H1 (cell line): ENCODE measurements at regions of chr5 and their contacts with region 1.

Region 1: DNA sequence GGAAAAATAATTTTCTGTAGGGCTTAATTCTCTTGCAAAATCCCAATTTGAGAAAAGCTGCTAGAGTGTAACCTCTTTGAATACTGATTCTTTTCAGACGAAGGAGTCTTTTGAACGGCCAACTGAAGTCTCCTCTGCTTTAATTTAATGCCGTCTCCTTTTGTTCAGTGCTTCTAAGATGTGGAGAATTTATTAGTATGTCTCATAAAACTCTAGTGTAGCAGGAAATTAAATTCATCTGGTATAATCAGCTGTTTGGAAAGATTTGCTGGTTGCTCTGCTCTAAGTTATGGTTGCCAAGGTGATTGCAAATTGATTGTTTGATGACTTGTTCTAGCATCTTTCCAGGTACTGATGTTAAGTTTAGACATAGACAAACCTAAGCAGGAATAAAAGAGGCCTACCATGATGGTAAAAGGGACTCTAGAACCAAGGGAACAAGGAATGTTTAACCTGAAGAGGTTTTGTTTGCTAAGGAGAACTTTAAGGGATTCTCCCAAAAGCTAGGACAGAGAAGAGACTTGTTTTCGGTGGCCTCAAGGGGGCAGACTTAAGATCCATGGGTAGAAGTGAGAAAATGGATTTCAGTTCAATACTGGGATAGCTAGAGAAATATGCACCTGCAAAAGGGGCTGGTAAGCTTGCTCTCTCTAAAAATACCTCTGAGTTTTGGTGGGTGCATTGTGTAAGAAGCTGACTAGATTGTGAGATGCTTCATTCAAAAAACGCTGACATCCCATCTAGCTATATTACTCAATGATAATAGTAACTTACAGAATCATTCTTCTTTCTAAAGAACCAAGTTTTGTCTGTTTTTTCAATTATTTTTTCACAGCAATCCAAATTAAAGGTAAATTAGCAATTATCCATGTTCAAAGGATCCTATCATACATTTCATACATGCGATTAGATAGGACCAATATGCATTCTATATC is 5.7 kb upstream of the ADRB2 start:
- DNase-seq: no peak
- H3K4me3 ChIP-seq: no peak overlapping the region
- H3K27ac ChIP-seq: no peak overlapping the region
- H3K4me1 ChIP-seq: peaks cover 0 to 1% (median 0%) of the 10 kb centered on the region in 4 experiments; a peak in 4 of 7 replicates
- H3K27me3 ChIP-seq: peaks cover 0 to 5% (median under 1%) of the 10 kb centered on the region in 4 experiments; a peak in 4 of 7 replicates
- CTCF ChIP-seq: peak in 2 of 3 experiments; percentile 46 to 68; a peak in 3 of 4 replicates
- EP300 ChIP-seq: no peak
- POLR2A ChIP-seq: no peak
- RAD21 ChIP-seq: peak; percentile 46 to 59; a peak in 3 of 4 replicates

Region 2: GRCh38 chr5:148760945-148761638 is 59.6 kb before region 1 on chr5:
- CTCF ChIA-PET with region 1: no interaction called
- POLR2A ChIA-PET with region 1: no interaction called
- DNase-seq: no peak
- H3K4me3 ChIP-seq: no peak overlapping the region
- H3K27ac ChIP-seq: no peak overlapping the region
- H3K4me1 ChIP-seq: no peaks in the 10 kb centered on the region
- H3K27me3 ChIP-seq: no peaks in the 10 kb centered on the region
- CTCF ChIP-seq: no peak
- EP300 ChIP-seq: no peak
- POLR2A ChIP-seq: no peak
- RAD21 ChIP-seq: no peak

Region 3: GRCh38 chr5:148791334-148791667 is 29.4 kb before region 1 on chr5:
- CTCF ChIA-PET with region 1: interaction called, 10 read pairs
- POLR2A ChIA-PET with region 1: no interaction called
- DNase-seq: no peak
- H3K4me3 ChIP-seq: no peak overlapping the region
- H3K27ac ChIP-seq: no peak overlapping the region
- H3K4me1 ChIP-seq: no peaks in the 10 kb centered on the region
- H3K27me3 ChIP-seq: no peaks in the 10 kb centered on the region
- CTCF ChIP-seq: no peak
- EP300 ChIP-seq: no peak
- POLR2A ChIP-seq: no peak
- RAD21 ChIP-seq: no peak

Region 4: DNA sequence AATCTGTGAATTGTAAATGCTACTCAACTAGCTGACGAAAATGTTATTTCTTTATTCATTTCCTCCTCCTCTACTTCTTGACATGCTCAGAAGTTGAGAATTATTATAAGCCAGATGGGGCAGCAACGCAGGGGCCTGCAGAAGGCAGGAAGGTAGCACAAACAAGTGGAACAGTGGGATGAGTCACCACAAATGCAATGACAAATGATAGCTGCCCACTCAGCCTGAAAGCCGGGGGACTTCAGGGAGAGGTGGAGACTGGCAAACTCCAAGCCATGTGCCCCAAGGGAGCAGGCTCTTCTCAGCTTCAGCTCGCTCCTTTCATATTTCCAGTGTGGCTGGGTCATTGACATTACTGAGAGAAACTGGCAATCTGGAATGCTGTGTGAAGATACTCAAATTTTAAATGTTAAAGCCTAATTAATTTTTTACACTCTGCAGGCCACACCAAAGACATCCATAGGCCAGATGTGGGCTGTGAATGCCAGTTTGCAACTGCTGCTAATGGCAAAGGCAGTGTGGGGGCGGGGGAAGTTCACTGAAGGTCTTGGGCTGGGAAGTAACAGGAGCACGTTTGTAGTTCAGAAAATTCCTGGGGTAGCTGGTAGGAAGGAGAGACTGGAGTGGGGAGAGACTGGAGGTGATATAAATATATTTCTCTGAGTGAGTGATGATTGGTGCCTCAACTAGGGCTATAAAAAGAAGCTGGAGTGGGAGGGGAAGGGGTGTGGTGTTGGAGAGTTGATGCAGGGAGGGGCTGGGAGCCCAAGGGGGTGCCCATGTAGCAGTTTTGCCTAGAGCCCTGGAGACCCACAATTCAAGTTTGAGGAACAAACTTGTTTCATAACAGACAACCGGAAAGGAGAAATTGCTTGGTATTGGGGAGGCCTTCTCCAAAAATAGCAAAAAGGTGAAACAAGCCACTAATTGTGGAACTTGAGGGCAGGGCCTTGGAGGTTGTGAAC is 15.1 kb before region 1 on chr5:
- CTCF ChIA-PET with region 1: interaction called, 20 read pairs
- POLR2A ChIA-PET with region 1: no interaction called
- DNase-seq: no peak
- H3K4me3 ChIP-seq: no peak overlapping the region
- H3K27ac ChIP-seq: no peak overlapping the region
- H3K4me1 ChIP-seq: peaks cover 0 to 4% (median 0%) of the 10 kb centered on the region in 4 experiments; a peak in 2 of 7 replicates
- H3K27me3 ChIP-seq: no peaks in the 10 kb centered on the region
- CTCF ChIP-seq: no peak
- EP300 ChIP-seq: no peak
- POLR2A ChIP-seq: no peak
- RAD21 ChIP-seq: no peak

Region 5: DNA sequence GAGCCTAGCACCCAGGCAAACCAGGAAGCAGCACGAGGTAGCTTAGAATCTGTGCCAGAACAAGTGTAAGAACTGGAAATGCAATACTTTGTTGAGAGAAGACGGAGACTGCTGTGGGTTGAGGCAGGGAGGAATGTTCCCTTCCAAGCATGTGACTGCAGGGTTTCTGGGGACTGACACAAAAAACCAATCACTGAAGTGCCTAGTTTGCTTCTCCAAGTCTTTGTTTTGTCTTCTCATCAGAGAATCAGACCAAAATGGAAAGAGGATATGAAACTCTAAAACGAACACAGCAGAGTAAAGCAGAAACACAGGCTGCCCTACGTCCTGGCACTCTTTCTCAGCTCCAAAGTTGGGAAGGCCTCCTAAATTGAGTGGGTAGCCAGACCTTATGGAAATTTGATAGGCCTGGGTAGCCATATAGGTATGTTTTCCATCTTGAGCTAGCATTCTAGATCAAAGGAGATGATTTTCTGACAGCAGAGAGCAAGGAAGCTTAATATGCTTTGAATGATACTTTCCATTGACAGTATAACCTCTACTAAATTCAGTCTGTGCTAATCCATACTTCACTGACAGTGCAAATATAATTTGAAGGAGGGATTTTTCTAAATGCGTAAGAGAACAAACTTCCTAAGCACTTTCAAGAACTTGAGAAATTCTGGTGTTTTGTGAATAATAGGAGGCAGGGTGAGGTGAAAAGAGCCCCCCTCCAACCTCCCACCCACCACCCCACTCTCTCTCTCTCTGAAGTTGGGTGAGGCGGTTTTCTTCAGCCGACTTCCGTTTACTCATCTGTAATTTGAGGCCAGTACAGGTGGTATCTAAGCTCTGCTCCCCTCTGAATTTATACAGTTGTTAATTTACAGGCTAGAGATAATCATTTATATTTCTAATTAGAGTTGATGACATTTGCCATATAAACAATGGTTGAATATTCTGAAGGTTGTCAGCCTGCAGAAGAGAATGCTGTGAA is 11.2 kb after region 1 on chr5:
- CTCF ChIA-PET with region 1: interaction called, 32 read pairs
- POLR2A ChIA-PET with region 1: no interaction called
- DNase-seq: no peak
- H3K4me3 ChIP-seq: no peak overlapping the region
- H3K27ac ChIP-seq: no peak overlapping the region
- H3K4me1 ChIP-seq: no peaks in the 10 kb centered on the region; a peak in 1 of 7 replicates
- H3K27me3 ChIP-seq: peaks cover 5 to 10% (median 9%) of the 10 kb centered on the region in 4 experiments
- CTCF ChIP-seq: no peak
- EP300 ChIP-seq: no peak
- POLR2A ChIP-seq: no peak
- RAD21 ChIP-seq: no peak

Region 6: DNA sequence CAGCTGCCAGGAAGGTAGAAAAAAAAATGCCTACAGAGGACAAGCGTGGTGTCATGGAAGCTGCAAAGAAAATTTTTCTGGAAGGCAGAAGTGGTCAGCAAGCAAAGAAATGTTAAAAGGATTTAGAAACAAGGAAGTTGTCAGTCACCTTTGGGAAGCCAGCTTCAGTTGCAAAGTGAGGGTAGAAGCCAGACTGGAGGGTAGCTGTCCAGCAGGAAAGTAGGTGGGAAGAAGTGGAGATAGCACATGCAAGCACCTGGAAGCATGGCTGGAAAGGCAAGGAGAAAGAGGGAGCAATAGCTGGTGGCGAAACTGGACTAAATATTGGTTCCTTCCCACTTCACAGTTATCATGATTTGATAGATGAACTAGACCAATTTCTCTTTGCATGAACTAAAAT is 60.0 kb after region 1 on chr5:
- CTCF ChIA-PET with region 1: interaction called, 11 read pairs
- POLR2A ChIA-PET with region 1: no interaction called
- DNase-seq: no peak
- H3K4me3 ChIP-seq: no peak overlapping the region
- H3K27ac ChIP-seq: no peak overlapping the region
- H3K4me1 ChIP-seq: no peaks in the 10 kb centered on the region
- H3K27me3 ChIP-seq: no peaks in the 10 kb centered on the region
- CTCF ChIP-seq: no peak
- EP300 ChIP-seq: no peak
- POLR2A ChIP-seq: no peak
- RAD21 ChIP-seq: no peak

Region 7: GRCh38 chr5:148963664-148964063 is 142.9 kb after region 1 on chr5:
- CTCF ChIA-PET with region 1: interaction called, 46 read pairs
- POLR2A ChIA-PET with region 1: no interaction called
- DNase-seq: peak in 1 of 2 experiments; percentile 0
- H3K4me3 ChIP-seq: no peak overlapping the region
- H3K27ac ChIP-seq: no peak overlapping the region
- H3K4me1 ChIP-seq: no peaks in the 10 kb centered on the region
- H3K27me3 ChIP-seq: no peaks in the 10 kb centered on the region
- CTCF ChIP-seq: no peak
- EP300 ChIP-seq: no peak
- POLR2A ChIP-seq: no peak
- RAD21 ChIP-seq: no peak

Region 8: GRCh38 chr5:148972958-148973357 is 152.2 kb after region 1 on chr5:
- CTCF ChIA-PET with region 1: interaction called, 14 read pairs
- POLR2A ChIA-PET with region 1: no interaction called
- DNase-seq: no peak
- H3K4me3 ChIP-seq: no peak overlapping the region
- H3K27ac ChIP-seq: no peak overlapping the region
- H3K4me1 ChIP-seq: peaks cover 0 to 7% (median 3%) of the 10 kb centered on the region in 4 experiments; a peak in 5 of 7 replicates
- H3K27me3 ChIP-seq: no peaks in the 10 kb centered on the region
- CTCF ChIP-seq: no peak
- EP300 ChIP-seq: no peak
- POLR2A ChIP-seq: no peak
- RAD21 ChIP-seq: no peak